ENCODE measurements at regions of chr1 and their contacts with region 1.

Region 1: DNA sequence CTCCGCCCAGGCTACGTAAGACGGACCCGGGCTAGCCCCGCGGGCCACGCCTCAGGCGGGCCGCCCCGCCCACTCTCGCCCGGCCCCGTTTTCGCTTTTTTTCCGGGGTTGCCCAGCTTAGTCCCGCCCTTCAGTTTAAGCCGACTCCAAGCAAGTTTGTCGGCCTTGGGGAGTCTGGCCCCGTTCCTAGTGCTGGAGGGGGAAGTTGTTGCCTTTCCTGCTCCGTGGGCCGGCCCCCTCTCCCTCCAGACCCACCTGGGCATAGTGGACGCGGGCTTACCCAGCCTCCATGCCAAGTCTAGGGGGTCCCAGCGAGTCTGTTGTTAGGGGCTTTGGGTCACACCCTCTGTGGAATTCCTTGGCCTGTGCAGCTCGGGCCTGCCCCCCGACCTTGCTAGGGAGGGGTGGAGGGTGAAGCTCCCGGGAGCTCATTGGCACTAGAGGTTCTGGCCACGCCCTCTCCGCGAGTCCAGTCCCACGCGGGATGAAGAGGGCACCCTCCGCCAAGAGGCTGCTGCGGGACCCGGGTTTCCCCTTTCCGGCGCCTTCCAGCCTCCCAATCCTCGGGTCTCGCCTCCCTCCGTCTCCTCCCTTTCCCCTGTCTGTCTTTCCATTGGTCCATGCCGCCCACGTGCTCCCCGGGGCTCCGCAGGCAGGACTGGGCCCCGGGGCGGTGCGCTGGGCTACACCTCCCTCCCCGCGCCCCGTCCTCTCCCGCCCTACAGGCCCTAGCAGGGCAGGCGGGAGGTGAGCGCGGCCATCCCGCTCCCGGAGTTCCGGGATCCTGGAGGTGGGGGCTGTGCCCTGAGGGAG is 3.3 kb downstream of the RUSC1 start:
- DNase-seq: peak; percentile 90 to 97 (median 92)
- H3K4me3 ChIP-seq: peak overlapping the region; percentile 52 to 100 (median 82)
- H3K27ac ChIP-seq: peak overlapping the region; percentile 26 to 97 (median 92)
- H3K27me3 ChIP-seq: no peaks in the 10 kb centered on the region
- CTCF ChIP-seq: peak in 29 of 56 donors; percentile 2 to 53 (median 31)

Region 2: GRCh38 chr1:154998818-154999570 is 325.0 kb before region 1 on chr1:
- intact Hi-C with region 1: no loop called
- DNase-seq: peak in 4 of 10 donors; percentile 57 to 78 (median 66)
- H3K4me3 ChIP-seq: peak overlapping the region; percentile 18 to 93 (median 81)
- H3K27ac ChIP-seq: peak overlapping the region in 45 of 59 donors; percentile 6 to 99 (median 92)
- H3K27me3 ChIP-seq: no peaks in the 10 kb centered on the region
- CTCF ChIP-seq: peak; percentile 52 to 86 (median 77)

Region 3: GRCh38 chr1:155195201-155196102 is 128.6 kb before region 1 on chr1:
- intact Hi-C with region 1: no loop called
- DNase-seq: no peak
- H3K4me3 ChIP-seq: peak overlapping the region; percentile 42 to 76 (median 63)
- H3K27ac ChIP-seq: peak overlapping the region in 51 of 59 donors; percentile 0 to 91 (median 70)
- H3K27me3 ChIP-seq: no peaks in the 10 kb centered on the region
- CTCF ChIP-seq: no peak

Region 4: DNA sequence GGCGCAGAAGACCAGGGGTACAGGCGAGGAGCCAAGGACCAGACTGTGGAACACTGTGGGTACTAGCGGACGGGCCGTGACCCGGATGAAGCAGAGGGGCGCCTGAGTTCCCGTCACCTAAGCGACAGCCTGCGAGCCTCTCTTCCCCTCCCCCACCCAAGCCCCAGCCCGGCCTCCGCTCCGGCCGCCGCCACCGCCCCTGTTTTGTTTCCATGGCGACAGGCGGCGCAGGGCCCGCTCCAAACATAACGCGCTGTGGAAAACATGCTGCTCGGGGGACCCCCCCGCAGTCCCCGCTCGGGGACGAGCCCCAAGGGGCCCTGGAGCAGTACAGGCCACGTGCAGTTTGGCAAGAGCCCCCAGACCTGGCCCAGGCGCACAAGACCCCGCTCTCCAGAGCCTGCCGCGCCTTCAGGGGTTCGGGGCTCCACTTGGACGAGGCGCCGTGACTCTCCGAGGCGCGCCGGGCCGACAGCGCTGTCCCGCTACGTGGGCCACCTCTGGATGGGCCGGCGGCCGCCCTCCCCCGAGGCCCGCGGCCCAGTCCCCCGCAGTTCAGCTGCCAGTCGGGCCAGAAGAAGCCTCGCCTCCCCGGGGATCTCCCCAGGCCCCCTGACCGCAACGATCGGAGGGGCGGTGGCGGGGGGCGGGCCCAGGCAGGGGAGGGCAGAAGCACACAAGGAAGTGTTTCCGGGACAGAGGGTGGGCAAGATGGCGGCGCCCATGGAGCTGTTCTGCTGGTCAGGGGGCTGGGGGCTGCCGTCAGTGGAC is 115.3 kb before region 1 on chr1 and contains the start of gene MTX1:
- intact Hi-C with region 1: loop called in 1 of 2 experiments (anchors 5 kb)
- DNase-seq: peak; percentile 78 to 90 (median 87)
- H3K4me3 ChIP-seq: peak within 1 kb of the TSS; percentile 67 to 99 (median 93)
- H3K27ac ChIP-seq: peak within 1 kb of the TSS; percentile 65 to 100 (median 98)
- H3K27me3 ChIP-seq: no peaks in the 10 kb centered on the region
- CTCF ChIP-seq: peak in 11 of 56 donors; percentile 0 to 28 (median 11)
- total RNA-seq, gene MTX1: 13.5 to 26.7 (median 20.0) TPM

Region 5: GRCh38 chr1:155277070-155277895 is 46.7 kb before region 1 on chr1 and contains the start of gene HCN3:
- intact Hi-C with region 1: loop called (anchors 2 to 5 kb)
- DNase-seq: peak; percentile 97 to 99 (median 98)
- H3K4me3 ChIP-seq: peak within 1 kb of the TSS; percentile 48 to 94 (median 82)
- H3K27ac ChIP-seq: peak within 1 kb of the TSS in 54 of 59 donors; percentile 0 to 90 (median 73)
- H3K27me3 ChIP-seq: no peaks in the 10 kb centered on the region
- CTCF ChIP-seq: peak in 55 of 56 donors; percentile 53 to 95 (median 79)
- total RNA-seq, gene HCN3: 6.0 to 24.1 (median 11.7) TPM

Region 6: GRCh38 chr1:155504207-155504606 is 180.2 kb after region 1 on chr1:
- intact Hi-C with region 1: loop called in 1 of 2 experiments (anchors 5 kb)
- DNase-seq: no peak
- H3K4me3 ChIP-seq: no peak overlapping the region
- H3K27ac ChIP-seq: peak overlapping the region in 1 of 59 donors; percentile 11
- H3K27me3 ChIP-seq: no peaks in the 10 kb centered on the region
- CTCF ChIP-seq: peak in 52 of 56 donors; percentile 10 to 71 (median 46)

Region 7: DNA sequence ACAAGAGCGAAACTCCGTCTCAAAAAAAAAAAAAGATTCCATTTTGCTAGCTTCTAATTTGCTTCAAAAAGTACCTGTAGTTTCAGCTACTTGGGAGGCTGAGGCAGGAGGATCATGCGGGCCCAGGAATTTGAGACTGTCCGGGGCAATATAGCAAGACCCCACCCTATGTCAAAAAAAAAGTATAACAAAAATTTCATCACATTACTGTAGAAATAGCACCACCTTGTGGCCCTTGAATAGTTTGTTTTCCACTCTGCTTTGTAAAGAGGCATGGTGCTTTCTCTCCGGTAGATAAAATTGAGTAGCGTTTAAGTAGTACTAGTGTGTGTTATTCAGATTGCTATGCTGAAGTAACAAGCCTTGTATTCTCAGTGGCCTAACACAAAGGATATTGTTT is 267.8 kb after region 1 on chr1:
- intact Hi-C with region 1: loop called (anchors 10 kb)
- DNase-seq: peak in 1 of 10 donors; percentile 9
- H3K4me3 ChIP-seq: no peak overlapping the region
- H3K27ac ChIP-seq: peak overlapping the region in 8 of 59 donors; percentile 11 to 66 (median 18)
- H3K27me3 ChIP-seq: no peaks in the 10 kb centered on the region
- CTCF ChIP-seq: peak; percentile 47 to 81 (median 69)

Measured in dorsolateral prefrontal cortex (tissue), 120 donors.